Naive thymus-derived CD4-positive, alpha-beta T cell (primary cell): ENCODE measurements at regions of chr7 and their contacts with region 1.

Region 1: DNA sequence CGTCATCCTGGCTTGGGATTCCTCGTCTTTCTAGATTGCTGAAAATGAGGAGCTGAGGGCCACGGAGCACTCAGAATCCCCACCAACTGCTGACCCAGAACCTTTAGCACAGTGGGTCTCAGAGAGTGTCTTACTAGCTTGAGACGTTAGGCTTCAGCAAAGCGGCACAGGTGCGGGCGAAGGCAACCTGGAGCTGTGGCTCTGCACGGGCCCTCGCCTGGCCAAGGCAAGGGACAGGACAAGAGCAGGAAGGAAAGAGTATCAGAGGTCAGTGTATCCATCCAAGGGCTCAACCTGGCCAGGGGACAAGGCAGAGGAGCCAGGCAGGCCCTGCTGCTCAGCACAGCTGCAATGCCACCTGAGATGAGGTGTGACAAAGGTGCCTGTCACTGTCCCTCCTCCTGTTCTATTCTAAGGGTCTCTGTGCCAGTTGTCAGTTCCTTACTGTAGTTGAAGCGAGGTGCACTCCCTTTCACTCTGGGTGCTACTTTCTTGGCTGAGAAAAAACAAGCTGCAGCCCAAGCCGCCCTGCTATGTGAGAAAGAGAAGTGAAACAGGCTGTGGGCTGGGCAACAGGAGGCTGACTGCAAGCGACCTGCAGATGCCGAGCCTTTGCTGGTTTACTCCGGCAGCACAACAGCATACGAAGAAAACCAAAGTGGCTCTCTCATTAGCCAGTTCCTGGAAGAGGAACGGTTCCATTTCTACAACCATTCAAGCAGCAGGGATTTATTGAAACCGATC is 33.3 kb upstream of the KDM7A start:
- DNase-seq: peak in 6 of 9 donors; percentile 24 to 58 (median 34)
- ATAC-seq: peak; percentile 86
- H3K4me3 ChIP-seq: peak overlapping the region; percentile 29
- H3K4me3 Mint-ChIP-seq: peak overlapping the region; percentile 10 to 82 (median 68)
- H3K27ac ChIP-seq: no peak overlapping the region
- H3K27ac Mint-ChIP-seq: peak overlapping the region; percentile 66 to 96 (median 87)
- H3K4me1 ChIP-seq: peaks cover 17 to 36% of the 10 kb centered on the region in 2 donors
- H3K4me1 Mint-ChIP-seq: peaks cover 37 to 82% (median 58%) of the 10 kb centered on the region in 7 donors
- H3K27me3 ChIP-seq: no peaks in the 10 kb centered on the region
- H3K27me3 Mint-ChIP-seq: no peaks in the 10 kb centered on the region

Region 2: DNA sequence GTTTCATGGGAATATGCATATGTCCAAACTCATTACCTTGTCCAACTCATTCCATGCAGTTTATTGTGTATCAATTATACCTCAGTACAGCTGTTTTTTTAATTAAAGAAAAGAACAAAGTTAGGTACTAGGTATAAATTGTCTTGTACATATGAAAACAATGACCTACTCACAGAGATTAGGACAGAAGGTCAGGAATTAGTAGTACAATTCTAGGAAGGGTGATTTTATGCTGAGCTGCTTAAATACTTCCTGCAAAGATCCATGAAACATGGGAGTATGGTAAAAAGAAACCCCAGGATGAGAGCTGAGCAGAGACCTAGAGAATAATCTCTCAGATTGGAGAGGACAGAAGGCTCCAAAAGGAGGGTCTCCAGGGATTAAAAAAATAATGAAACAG is 19.4 kb before region 1 on chr7:
- CTCF ChIA-PET with region 1: no interaction called
- POLR2A ChIA-PET with region 1: interaction called, 5 read pairs
- intact Hi-C with region 1: loop called in 1 of 2 experiments (anchors 2 kb)
- DNase-seq: no peak
- ATAC-seq: no peak
- H3K4me3 ChIP-seq: no peak overlapping the region
- H3K4me3 Mint-ChIP-seq: no peak overlapping the region
- H3K27ac ChIP-seq: no peak overlapping the region
- H3K27ac Mint-ChIP-seq: peak overlapping the region in 1 of 9 donors; percentile 76
- H3K4me1 ChIP-seq: no peaks in the 10 kb centered on the region
- H3K4me1 Mint-ChIP-seq: peaks cover 0 to 11% (median 4%) of the 10 kb centered on the region in 7 donors
- H3K27me3 ChIP-seq: no peaks in the 10 kb centered on the region
- H3K27me3 Mint-ChIP-seq: peaks cover 0 to 20% (median 0%) of the 10 kb centered on the region in 5 donors

Region 3: DNA sequence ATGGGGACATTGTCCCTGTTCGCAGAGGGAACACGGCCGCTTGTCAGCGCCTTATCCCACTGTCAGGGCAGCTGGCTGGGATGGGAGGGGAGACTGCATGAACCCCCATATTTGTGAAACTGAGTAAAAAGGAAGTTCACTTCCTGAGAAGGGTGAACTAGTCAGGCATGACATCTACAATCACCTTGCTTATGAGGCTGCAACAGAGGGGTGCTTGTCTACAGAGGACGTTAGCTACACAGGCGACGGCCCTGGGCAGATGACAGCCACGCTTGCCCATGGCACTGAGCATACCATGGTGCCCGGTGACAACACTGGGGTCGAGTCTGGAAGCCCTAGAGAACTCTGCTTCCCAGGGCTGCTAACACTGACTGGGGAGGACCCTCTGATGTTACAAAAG is 12.8 kb after region 1 on chr7:
- CTCF ChIA-PET with region 1: interaction called, 4 read pairs
- POLR2A ChIA-PET with region 1: interaction called, 26 read pairs
- intact Hi-C with region 1: loop called in 1 of 2 experiments (anchors 1 kb)
- DNase-seq: no peak
- ATAC-seq: no peak
- H3K4me3 ChIP-seq: no peak overlapping the region
- H3K4me3 Mint-ChIP-seq: peak overlapping the region in 7 of 10 donors; percentile 26 to 76 (median 60)
- H3K27ac ChIP-seq: no peak overlapping the region
- H3K27ac Mint-ChIP-seq: peak overlapping the region; percentile 40 to 96 (median 87)
- H3K4me1 ChIP-seq: peaks cover 32 to 37% of the 10 kb centered on the region in 2 donors
- H3K4me1 Mint-ChIP-seq: peaks cover 33 to 55% (median 48%) of the 10 kb centered on the region in 7 donors
- H3K27me3 ChIP-seq: no peaks in the 10 kb centered on the region
- H3K27me3 Mint-ChIP-seq: no peaks in the 10 kb centered on the region

Region 4: DNA sequence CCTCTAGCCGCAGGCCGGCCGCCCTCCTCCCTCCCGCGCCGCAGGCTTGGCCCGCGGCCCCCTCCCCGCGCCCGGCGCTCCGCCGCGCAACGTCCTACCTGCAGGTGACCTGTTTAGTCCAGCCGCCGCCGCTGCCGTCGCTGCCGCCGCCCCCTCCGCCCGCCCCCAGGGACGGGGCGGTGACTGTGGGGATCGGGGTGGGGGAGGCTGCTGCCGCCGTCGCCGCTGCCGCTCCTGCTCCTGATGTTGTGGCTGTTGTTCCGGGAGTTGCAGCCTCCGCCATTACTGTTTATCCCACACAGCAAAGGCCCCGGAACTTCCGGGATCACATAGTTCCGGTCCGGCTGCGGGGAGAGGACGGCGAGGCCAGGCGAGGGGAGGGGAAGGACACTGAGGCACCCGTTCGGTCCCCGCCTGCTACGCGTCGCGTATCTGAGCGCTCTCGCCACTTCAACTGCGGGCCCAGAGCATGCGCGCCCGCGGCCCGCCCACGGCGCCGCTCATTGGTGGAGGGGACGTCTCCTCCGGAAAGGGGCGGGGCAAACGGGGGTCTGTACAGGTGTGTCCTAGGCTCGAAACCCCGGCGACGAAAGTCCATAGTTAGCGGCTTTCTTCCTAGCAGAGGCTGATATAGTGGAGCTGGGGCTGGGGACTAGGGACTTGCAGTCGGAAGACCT is 269.2 kb after region 1 on chr7 and contains the start of gene MKRN1:
- CTCF ChIA-PET with region 1: no interaction called
- POLR2A ChIA-PET with region 1: no interaction called
- intact Hi-C with region 1: no loop called
- DNase-seq: peak; percentile 87 to 93 (median 92)
- ATAC-seq: peak; percentile 93
- H3K4me3 ChIP-seq: peak within 1 kb of the TSS; percentile 84
- H3K4me3 Mint-ChIP-seq: peak within 1 kb of the TSS; percentile 90 to 100 (median 98)
- H3K27ac ChIP-seq: peak within 1 kb of the TSS; percentile 89
- H3K27ac Mint-ChIP-seq: peak within 1 kb of the TSS; percentile 92 to 99 (median 99)
- H3K4me1 ChIP-seq: peaks cover 21 to 28% of the 10 kb centered on the region in 2 donors
- H3K4me1 Mint-ChIP-seq: peaks cover 13 to 35% (median 25%) of the 10 kb centered on the region in 7 donors
- H3K27me3 ChIP-seq: no peaks in the 10 kb centered on the region
- H3K27me3 Mint-ChIP-seq: peaks cover 0 to 15% (median 0%) of the 10 kb centered on the region in 5 donors
- total RNA-seq, gene MKRN1: 85.1 to 162 (median 144) TPM

Region 5: GRCh38 chr7:140525743-140526142 is 315.7 kb after region 1 on chr7:
- CTCF ChIA-PET with region 1: no interaction called
- POLR2A ChIA-PET with region 1: no interaction called
- intact Hi-C with region 1: no loop called
- DNase-seq: peak in 4 of 9 donors; percentile 9 to 23 (median 18)
- ATAC-seq: peak; percentile 47
- H3K4me3 ChIP-seq: no peak overlapping the region
- H3K4me3 Mint-ChIP-seq: peak overlapping the region in 6 of 10 donors; percentile 16 to 73 (median 54)
- H3K27ac ChIP-seq: no peak overlapping the region
- H3K27ac Mint-ChIP-seq: peak overlapping the region in 5 of 9 donors; percentile 46 to 71 (median 47)
- H3K4me1 ChIP-seq: peaks cover 10 to 21% of the 10 kb centered on the region in 2 donors
- H3K4me1 Mint-ChIP-seq: peaks cover 18 to 29% (median 22%) of the 10 kb centered on the region in 7 donors
- H3K27me3 ChIP-seq: no peaks in the 10 kb centered on the region
- H3K27me3 Mint-ChIP-seq: peaks cover 0 to 7% (median 4%) of the 10 kb centered on the region in 5 donors